ENCODE measurements at regions of chr12 and their contacts with region 1.

Region 1: GRCh38 chr12:65556681-65557437 is 267.4 kb upstream of the HMGA2 start:
- DNase-seq: peak; percentile 88
- H3K4me3 ChIP-seq: no peak overlapping the region
- H3K27ac ChIP-seq: peak overlapping the region; percentile 47
- H3K4me1 ChIP-seq: peaks cover 17% of the 10 kb centered on the region
- H3K27me3 ChIP-seq: no peaks in the 10 kb centered on the region
- CTCF ChIP-seq: peak; percentile 88 to 96
- POLR2A ChIP-seq: no peak

Region 2: DNA sequence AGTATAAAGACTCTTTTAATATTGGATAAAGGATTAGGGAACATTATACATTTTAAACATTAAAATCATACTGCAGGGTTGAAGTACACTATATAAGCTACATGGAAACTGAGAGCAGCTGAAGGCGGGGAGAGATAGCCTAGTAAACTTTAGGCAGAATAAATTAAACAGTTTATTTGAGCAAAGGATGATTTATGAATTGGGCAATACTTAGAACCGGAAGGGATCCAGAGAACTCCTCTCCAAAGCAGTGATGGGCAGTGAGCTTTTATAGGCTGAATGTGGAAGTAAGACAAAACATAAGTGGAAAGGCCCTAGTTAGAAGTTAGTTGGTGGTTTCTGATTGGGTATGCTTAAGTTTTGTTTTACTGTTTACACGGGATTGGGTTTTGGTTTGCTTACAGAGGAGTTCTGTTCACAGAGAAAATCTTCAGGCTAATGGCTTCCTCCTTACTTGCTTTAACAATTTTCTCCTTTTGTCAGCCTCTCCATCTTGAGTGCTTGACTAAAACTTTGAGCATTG is 368.6 kb before region 1 on chr12:
- CTCF ChIA-PET with region 1: no interaction called
- POLR2A ChIA-PET with region 1: no interaction called
- dilution Hi-C with region 1: no loop called
- intact Hi-C with region 1: no loop called
- DNase-seq: no peak
- H3K4me3 ChIP-seq: no peak overlapping the region
- H3K27ac ChIP-seq: no peak overlapping the region
- H3K4me1 ChIP-seq: peaks cover 4% of the 10 kb centered on the region
- H3K27me3 ChIP-seq: no peaks in the 10 kb centered on the region
- CTCF ChIP-seq: no peak
- POLR2A ChIP-seq: no peak

Region 3: GRCh38 chr12:65313719-65314317 is 243.0 kb before region 1 on chr12:
- CTCF ChIA-PET with region 1: interaction called, 11 read pairs
- POLR2A ChIA-PET with region 1: no interaction called
- dilution Hi-C with region 1: no loop called
- intact Hi-C with region 1: loop called (anchors 1 kb)
- DNase-seq: peak; percentile 48
- H3K4me3 ChIP-seq: no peak overlapping the region
- H3K27ac ChIP-seq: no peak overlapping the region
- H3K4me1 ChIP-seq: peaks cover 13% of the 10 kb centered on the region
- H3K27me3 ChIP-seq: no peaks in the 10 kb centered on the region
- CTCF ChIP-seq: peak; percentile 13 to 14
- POLR2A ChIP-seq: no peak

Region 4: GRCh38 chr12:65443038-65443437 is 113.8 kb before region 1 on chr12:
- CTCF ChIA-PET with region 1: no interaction called
- POLR2A ChIA-PET with region 1: no interaction called
- dilution Hi-C with region 1: no loop called
- intact Hi-C with region 1: no loop called
- DNase-seq: no peak
- H3K4me3 ChIP-seq: no peak overlapping the region
- H3K27ac ChIP-seq: no peak overlapping the region
- H3K4me1 ChIP-seq: peaks cover 6% of the 10 kb centered on the region
- H3K27me3 ChIP-seq: no peaks in the 10 kb centered on the region
- CTCF ChIP-seq: no peak
- POLR2A ChIP-seq: no peak

Region 5: DNA sequence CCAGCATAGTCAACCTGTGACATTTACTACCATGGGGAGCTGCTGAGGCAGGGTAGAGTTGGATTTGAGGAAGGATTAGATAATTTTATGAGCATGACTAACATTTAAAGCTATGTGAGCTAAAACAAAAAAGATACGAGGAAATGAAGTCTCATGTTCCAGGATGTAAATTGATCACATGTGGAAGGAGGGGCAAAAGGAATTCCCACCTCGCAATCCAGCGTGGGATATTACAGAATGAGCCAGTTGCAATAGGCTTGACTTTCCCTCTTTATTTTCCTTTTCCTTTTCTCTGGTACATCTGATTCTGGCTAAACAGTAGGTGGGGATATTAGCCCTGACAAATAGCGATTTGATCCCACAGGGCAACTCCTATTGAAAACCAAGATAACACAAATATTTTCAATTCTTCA is 52.5 kb after region 1 on chr12:
- CTCF ChIA-PET with region 1: interaction called, 60 read pairs
- POLR2A ChIA-PET with region 1: no interaction called
- dilution Hi-C with region 1: no loop called
- intact Hi-C with region 1: no loop called
- DNase-seq: peak; percentile 79
- H3K4me3 ChIP-seq: no peak overlapping the region
- H3K27ac ChIP-seq: peak overlapping the region; percentile 25
- H3K4me1 ChIP-seq: peaks cover 73% of the 10 kb centered on the region
- H3K27me3 ChIP-seq: no peaks in the 10 kb centered on the region
- CTCF ChIP-seq: peak; percentile 5 to 8
- POLR2A ChIP-seq: no peak

Region 6: DNA sequence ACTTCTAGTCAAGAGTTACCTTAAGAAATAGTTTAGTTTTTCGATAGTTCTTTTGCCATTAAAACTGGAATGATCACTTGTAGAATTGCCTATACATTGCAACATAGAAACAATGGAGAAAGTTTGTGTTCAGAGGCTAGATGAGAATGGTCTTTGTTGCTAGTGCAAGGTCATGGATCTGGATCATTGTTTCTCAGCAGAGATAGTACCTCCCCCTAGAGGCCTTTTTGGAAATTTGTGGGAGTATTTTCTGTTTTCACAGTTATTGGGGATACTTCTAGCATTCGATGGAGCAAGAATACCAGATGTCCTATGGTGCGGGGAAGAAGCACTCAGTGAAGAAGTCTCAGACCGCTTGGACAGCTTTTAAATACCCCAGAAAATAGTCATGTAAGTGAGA is 128.7 kb after region 1 on chr12:
- CTCF ChIA-PET with region 1: interaction called, 16 read pairs
- POLR2A ChIA-PET with region 1: no interaction called
- dilution Hi-C with region 1: no loop called
- intact Hi-C with region 1: loop called (anchors 1 kb)
- DNase-seq: peak; percentile 63
- H3K4me3 ChIP-seq: no peak overlapping the region
- H3K27ac ChIP-seq: no peak overlapping the region
- H3K4me1 ChIP-seq: no peaks in the 10 kb centered on the region
- H3K27me3 ChIP-seq: no peaks in the 10 kb centered on the region
- CTCF ChIP-seq: peak; percentile 52 to 63
- POLR2A ChIP-seq: no peak

Region 7: GRCh38 chr12:65740873-65741600 is 184.2 kb after region 1 on chr12:
- CTCF ChIA-PET with region 1: interaction called, 17 read pairs
- POLR2A ChIA-PET with region 1: no interaction called
- dilution Hi-C with region 1: no loop called
- intact Hi-C with region 1: no loop called
- DNase-seq: peak; percentile 82
- H3K4me3 ChIP-seq: peak overlapping the region; percentile 75 to 88 (median 81)
- H3K27ac ChIP-seq: peak overlapping the region; percentile 77
- H3K4me1 ChIP-seq: peaks cover 5% of the 10 kb centered on the region
- H3K27me3 ChIP-seq: no peaks in the 10 kb centered on the region
- CTCF ChIP-seq: no peak
- POLR2A ChIP-seq: no peak

Region 8: GRCh38 chr12:65986047-65986446 is 429.2 kb after region 1 on chr12:
- CTCF ChIA-PET with region 1: interaction called, 6 read pairs
- POLR2A ChIA-PET with region 1: no interaction called
- dilution Hi-C with region 1: no loop called
- intact Hi-C with region 1: loop called (anchors 5 kb)
- DNase-seq: peak; percentile 28
- H3K4me3 ChIP-seq: no peak overlapping the region
- H3K27ac ChIP-seq: no peak overlapping the region
- H3K4me1 ChIP-seq: no peaks in the 10 kb centered on the region
- H3K27me3 ChIP-seq: no peaks in the 10 kb centered on the region
- CTCF ChIP-seq: peak in 1 of 2 donors; percentile 12
- POLR2A ChIP-seq: no peak

Region 9: GRCh38 chr12:66087365-66087943 is 530.6 kb after region 1 on chr12:
- CTCF ChIA-PET with region 1: interaction called, 23 read pairs
- POLR2A ChIA-PET with region 1: no interaction called
- dilution Hi-C with region 1: no loop called
- intact Hi-C with region 1: loop called (anchors 1 kb)
- DNase-seq: peak; percentile 67
- H3K4me3 ChIP-seq: no peak overlapping the region
- H3K27ac ChIP-seq: no peak overlapping the region
- H3K4me1 ChIP-seq: peaks cover 2% of the 10 kb centered on the region
- H3K27me3 ChIP-seq: no peaks in the 10 kb centered on the region
- CTCF ChIP-seq: peak; percentile 65 to 76
- POLR2A ChIP-seq: no peak

Measured in endothelial cell of umbilical vein (primary cell).